ENCODE measurements at regions of chr6 and their contacts with region 1.

Region 1: GRCh38 chr6:111764238-111765175 is 108.7 kb downstream of the FYN start:
- DNase-seq: peak; percentile 26
- H3K4me3 ChIP-seq: peak overlapping the region; percentile 3
- H3K27ac ChIP-seq: peak overlapping the region; percentile 96
- H3K4me1 ChIP-seq: peaks cover 82% of the 10 kb centered on the region
- CTCF ChIP-seq: no peak

Region 2: DNA sequence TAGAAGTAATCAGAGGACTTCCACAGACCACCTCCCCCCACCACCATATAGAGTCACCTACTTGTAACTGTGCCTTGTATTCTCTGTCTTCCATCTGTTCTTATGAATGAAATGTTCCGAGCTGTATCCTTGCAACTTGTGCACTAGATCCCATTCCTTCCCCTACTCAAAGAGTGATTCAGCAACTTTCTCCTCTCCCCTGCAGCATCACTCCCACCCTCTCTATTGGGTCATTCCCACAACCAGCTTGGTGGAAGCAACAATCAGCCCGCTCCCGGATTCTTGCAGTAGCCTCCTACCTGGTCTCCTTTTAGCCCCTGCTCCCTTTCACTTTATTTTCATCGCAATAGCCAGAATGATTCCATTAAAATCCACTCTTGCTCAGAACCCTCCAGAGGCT is 246.5 kb before region 1 on chr6:
- CTCF ChIA-PET with region 1: no interaction called
- POLR2A ChIA-PET with region 1: no interaction called
- intact Hi-C with region 1: no loop called
- DNase-seq: no peak
- H3K4me3 ChIP-seq: no peak overlapping the region
- H3K27ac ChIP-seq: no peak overlapping the region
- H3K4me1 ChIP-seq: no peaks in the 10 kb centered on the region
- CTCF ChIP-seq: no peak

Region 3: DNA sequence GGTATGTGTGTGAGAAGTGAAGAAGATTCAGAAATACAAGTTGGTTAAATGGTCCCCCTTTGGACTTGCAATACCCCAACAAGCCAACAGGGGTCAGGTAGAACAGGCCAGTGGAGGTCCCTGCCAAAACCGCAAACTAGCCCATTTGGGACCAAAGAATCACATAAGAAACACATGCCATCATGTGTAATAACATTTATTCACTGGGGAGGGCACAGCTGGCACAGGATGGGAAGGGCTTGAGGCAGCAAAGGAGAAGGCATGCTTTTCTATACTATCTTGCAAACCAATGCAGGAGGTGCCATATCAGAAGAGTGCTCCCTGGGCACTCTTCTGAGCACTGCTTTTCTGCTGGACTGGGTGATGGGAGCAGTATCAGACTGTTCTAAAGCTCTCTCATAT is 42.8 kb before region 1 on chr6:
- CTCF ChIA-PET with region 1: no interaction called
- POLR2A ChIA-PET with region 1: interaction called, 6 read pairs
- intact Hi-C with region 1: loop called (anchors 5 kb)
- DNase-seq: peak; percentile 55
- H3K4me3 ChIP-seq: no peak overlapping the region
- H3K27ac ChIP-seq: no peak overlapping the region
- H3K4me1 ChIP-seq: peaks cover 38% of the 10 kb centered on the region
- CTCF ChIP-seq: peak; percentile 83

Region 4: DNA sequence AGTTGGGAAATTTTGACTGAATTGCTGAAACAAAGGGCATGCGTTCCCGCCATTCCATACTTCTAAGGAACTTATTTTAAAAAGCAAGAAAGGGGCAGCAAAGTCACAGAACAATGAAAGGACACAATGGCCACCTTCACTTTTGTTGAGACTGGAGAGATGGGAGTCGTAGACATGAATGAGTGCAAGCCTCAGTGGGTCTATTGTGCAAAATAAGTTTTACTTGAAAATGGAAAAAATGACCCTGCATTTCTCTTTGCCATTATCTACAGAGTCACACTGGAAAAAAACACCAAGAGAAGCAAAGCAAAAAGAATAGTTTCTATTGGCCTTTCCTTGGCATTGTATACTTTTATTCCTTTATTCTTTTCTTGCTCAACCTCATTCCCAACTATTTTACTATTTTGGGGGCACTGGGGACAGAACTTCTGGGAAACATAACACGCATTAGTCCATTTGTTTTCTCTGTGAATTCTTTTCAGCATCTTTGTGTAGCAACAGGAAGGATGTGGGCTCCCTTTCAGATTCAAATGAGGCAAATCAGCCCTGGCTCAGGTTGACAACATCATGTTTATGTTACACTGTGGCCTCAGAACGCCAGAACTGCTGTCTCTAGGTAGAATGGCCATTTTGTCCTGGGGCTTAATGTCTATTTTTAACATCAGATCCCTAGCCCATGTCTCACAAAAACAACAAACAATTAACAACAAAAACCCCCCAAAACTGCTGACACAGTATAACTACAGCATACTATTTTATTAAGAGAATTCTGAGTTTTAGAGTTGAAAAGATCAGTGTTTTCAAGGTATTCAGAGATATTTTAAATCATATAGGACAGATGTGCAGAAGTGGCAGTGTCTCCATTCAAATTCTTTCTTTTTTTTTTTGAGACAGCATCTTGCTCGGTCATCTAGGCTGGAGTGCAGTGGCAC is 13.5 kb before region 1 on chr6:
- CTCF ChIA-PET with region 1: interaction called, 3 read pairs
- POLR2A ChIA-PET with region 1: interaction called, 42 read pairs
- intact Hi-C with region 1: loop called (anchors 1 kb)
- DNase-seq: peak; percentile 83
- H3K4me3 ChIP-seq: peak overlapping the region; percentile 36
- H3K27ac ChIP-seq: peak overlapping the region; percentile 38
- H3K4me1 ChIP-seq: peaks cover 75% of the 10 kb centered on the region
- CTCF ChIP-seq: no peak

Region 5: DNA sequence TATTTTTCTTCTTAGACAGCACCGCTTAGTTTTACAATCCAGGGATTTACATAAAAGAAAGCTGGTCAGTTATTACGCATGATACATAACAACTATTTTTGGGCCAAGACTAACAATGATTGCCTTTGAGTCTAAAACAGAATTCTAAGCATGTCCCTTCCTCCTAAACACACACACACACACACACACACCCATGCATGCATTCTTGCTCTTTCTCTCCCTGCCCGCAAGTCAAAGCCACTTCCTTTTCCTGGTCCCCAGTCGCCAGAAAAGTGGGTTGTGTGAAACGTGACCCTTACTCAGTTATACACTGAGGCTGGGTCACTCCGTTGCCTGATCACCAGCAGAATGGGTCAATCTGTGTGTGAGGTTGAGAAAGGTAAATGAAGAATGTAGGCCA is 77.3 kb after region 1 on chr6:
- CTCF ChIA-PET with region 1: no interaction called
- POLR2A ChIA-PET with region 1: no interaction called
- intact Hi-C with region 1: loop called (anchors 5 kb)
- DNase-seq: peak; percentile 43
- H3K4me3 ChIP-seq: no peak overlapping the region
- H3K27ac ChIP-seq: no peak overlapping the region
- H3K4me1 ChIP-seq: peaks cover 33% of the 10 kb centered on the region
- CTCF ChIP-seq: no peak